Activated CD8-positive, alpha-beta memory T cell treated with anti-CD3 and anti-CD28 coated beads, Interleukin-2, amount 10 ng/mL, durations not matched to agents 7 days and 5 days (primary cell): ENCODE measurements at regions of chr1 and their contacts with region 1.

Region 1: GRCh38 chr1:19596714-19597495 is 47.2 kb upstream of the NBL1 start:
- DNase-seq: peak; percentile 99
- ATAC-seq: peak; percentile 85
- H3K4me3 Mint-ChIP-seq: peak overlapping the region; percentile 94
- H3K27ac Mint-ChIP-seq: peak overlapping the region; percentile 97
- H3K4me1 Mint-ChIP-seq: peaks cover 48% of the 10 kb centered on the region
- H3K27me3 Mint-ChIP-seq: peaks cover 2% of the 10 kb centered on the region

Region 2: GRCh38 chr1:19643602-19644394 is 46.9 kb after region 1 on chr1 and contains the start of gene NBL1:
- CTCF ChIA-PET with region 1: interaction called, 12 read pairs
- DNase-seq: peak; percentile 78
- ATAC-seq: peak; percentile 90
- H3K4me3 Mint-ChIP-seq: peak within 1 kb of the TSS; percentile 99
- H3K27ac Mint-ChIP-seq: peak within 1 kb of the TSS; percentile 91
- H3K4me1 Mint-ChIP-seq: peaks cover 35% of the 10 kb centered on the region
- H3K27me3 Mint-ChIP-seq: peaks cover 18% of the 10 kb centered on the region
- total RNA-seq, gene NBL1: 39.4 to 49.8 TPM